ENCODE measurements at regions of chr1 and their contacts with region 1.

Region 1: DNA sequence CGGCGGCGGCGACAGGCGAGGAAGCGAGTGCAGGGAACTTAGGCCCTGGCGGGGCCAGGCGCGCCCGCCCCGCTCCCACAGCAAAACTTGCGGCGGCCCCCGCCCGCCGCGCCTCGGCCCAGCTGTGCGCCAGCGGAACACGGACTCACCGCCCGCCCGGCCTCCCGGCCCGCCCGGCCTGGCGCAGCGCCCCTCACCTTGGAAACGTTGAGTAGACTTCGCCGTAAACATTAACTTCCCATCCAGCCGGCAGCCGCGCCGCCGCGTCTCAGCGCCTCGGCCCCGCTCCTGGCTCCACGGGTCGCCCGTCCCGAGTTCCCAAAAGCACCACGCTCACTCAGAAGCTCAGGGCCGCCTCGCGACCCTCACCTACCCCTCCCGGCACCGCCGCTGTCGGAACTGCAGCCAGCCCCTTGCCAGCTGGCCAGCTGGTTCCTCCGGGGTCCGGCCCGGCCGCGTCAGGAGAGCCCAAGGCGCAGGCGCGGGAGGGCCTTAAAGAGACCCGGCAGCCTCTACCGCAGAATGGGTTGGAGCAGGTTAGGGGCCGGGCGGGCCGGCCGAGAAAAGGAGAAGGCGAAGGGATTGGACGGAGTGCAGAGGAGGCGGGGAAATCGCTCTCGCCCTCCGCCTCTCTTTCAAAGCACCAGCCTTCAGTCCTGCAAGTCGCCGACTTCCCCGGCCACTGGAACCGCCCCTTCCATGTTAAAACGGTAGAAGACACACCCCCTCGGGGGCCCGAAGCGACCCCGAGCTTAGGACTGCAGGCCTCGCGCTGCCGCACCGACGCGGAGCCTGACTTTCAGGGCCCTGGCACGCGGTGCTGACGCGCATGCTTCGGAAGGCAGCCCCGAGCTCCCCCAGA is at the start of gene EVI5:
- DNase-seq: peak; percentile 97
- H3K4me3 ChIP-seq: peak within 1 kb of the TSS; percentile 88
- H3K27ac ChIP-seq: peak within 1 kb of the TSS; percentile 60
- H3K4me1 ChIP-seq: peaks cover 14% of the 10 kb centered on the region
- CTCF ChIP-seq: no peak
- total RNA-seq, gene EVI5: 15.1 and 27.3 TPM in 2 replicates

Region 2: DNA sequence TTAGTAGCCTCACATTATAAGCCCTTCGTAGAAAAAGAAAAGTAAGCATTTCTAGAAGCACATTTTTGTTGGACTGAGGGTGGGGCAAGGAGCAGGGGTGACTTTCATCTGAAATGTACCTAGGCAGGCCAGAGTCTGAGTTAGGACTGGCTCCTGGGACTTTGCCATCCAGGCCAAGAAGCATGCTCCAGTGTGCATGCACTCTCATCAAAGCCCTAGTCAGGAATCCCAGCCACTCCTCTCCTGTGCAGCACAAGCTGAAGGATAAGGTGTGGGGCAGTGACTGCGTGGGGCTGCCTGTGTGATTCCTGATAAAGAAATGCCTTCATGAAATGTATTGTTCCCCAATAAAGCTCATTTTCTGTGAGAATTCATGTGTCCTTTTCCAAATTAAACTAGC is 386.4 kb before region 1 on chr1:
- CTCF ChIA-PET with region 1: no interaction called
- POLR2A ChIA-PET with region 1: no interaction called
- intact Hi-C with region 1: no loop called
- DNase-seq: no peak
- H3K4me3 ChIP-seq: no peak overlapping the region
- H3K27ac ChIP-seq: no peak overlapping the region
- H3K4me1 ChIP-seq: no peaks in the 10 kb centered on the region
- CTCF ChIP-seq: no peak

Region 3: DNA sequence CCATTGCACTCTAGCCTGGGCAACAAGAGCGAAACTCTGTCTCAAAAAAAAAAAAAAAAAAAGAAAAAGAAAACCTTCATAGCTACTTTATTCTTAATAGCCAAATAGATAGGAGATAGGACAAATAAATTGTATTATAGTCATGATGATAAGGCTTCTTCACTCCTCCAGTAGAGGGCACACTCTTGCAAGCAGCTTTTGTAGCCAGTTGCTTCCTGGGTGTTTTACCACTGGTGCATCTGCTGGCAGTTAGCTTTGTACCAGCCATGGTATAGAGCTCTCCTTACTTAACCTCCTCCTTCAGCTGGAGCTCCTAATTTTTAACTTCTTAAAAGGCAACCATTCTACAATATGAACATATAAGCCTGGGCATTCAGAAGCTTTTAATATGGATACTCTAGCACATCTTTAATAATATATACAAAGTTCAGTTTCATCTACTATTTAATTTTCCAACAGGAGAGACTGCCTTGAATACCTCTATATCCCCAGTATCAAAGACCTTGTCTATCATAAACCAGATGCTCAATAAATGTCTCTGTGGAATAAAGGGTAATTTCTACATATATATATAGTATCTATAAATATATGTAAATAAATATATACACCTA is 35.7 kb before region 1 on chr1:
- CTCF ChIA-PET with region 1: interaction called, 4 read pairs
- POLR2A ChIA-PET with region 1: interaction called, 4 read pairs
- intact Hi-C with region 1: loop called (anchors 5 kb)
- DNase-seq: peak; percentile 81
- H3K4me3 ChIP-seq: no peak overlapping the region
- H3K27ac ChIP-seq: no peak overlapping the region
- H3K4me1 ChIP-seq: no peaks in the 10 kb centered on the region
- CTCF ChIP-seq: peak; percentile 88

Region 4: DNA sequence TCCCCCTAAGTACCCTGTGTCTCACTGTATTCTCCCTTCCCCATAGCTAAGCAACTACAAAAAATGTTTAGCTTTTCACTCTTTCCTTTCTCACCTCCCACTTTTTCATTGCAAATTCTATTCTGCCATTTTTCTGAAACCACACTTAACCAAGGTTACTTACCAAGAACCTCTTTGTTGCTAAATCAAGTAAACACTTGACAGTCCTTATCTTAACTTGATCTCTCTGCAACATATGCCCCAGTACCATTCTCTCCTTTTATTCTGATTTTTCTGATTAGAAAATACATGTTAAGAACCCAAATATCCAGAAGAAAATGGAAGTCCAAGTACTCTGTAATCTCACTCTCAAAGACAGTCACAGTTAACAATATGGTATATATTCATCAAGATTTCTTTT is 16.0 kb before region 1 on chr1:
- CTCF ChIA-PET with region 1: no interaction called
- POLR2A ChIA-PET with region 1: interaction called, 13 read pairs
- intact Hi-C with region 1: no loop called
- DNase-seq: no peak
- H3K4me3 ChIP-seq: no peak overlapping the region
- H3K27ac ChIP-seq: no peak overlapping the region
- H3K4me1 ChIP-seq: no peaks in the 10 kb centered on the region
- CTCF ChIP-seq: no peak

Region 5: DNA sequence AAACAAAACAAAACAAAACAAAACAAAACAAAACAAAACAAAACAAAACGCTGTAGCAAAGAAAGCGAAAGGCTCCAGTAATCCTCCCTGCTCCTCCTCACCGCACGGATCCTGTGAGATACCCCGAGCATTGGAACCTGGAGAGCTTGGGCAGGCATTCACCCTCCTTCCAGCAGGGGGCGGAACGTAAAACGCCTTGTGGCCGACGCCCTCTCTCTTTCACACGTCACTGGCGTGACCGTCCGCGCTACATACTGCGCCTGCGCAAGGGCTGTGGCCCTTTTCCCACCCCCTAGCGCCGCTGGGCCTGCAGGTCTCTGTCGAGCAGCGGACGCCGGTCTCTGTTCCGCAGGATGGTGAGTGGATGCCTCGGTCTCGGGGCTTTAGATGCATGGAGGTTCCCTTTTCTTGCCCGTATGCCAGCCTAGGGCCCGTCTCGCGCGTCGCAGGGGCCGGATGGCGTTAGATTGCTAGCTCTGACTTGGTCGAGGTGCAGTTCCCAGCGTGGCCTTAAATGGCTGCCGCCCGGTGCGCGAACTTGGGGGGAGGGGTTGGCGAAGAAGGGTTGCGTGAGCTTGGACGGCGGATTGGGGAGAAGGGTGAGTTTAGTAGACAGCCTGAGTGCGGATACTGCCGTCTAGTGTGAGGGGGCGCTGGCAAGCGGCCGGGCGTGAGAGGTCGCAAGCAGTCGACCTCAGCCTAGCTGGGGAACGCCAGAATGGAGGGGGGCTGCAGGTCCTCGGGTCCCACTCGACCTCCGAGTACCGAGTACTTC is 47.1 kb after region 1 on chr1 and contains the start of gene RPL5:
- CTCF ChIA-PET with region 1: no interaction called
- POLR2A ChIA-PET with region 1: interaction called, 8 read pairs
- intact Hi-C with region 1: loop called (anchors 1 kb)
- DNase-seq: peak; percentile 98
- H3K4me3 ChIP-seq: peak within 1 kb of the TSS; percentile 89
- H3K27ac ChIP-seq: peak within 1 kb of the TSS; percentile 59
- H3K4me1 ChIP-seq: peaks cover 41% of the 10 kb centered on the region
- CTCF ChIP-seq: peak; percentile 85
- total RNA-seq, gene RPL5: 1,862 and 2,614 TPM in 2 replicates

Measured in OCI-LY7 (cell line).